Mammary epithelial cell (primary cell): ENCODE measurements at regions of chr6 and their contacts with region 1.

Region 1: GRCh38 chr6:104201557-104201956 is 658.2 kb downstream of the HACE1 start:
- DNase-seq: no peak
- H3K4me3 ChIP-seq: no peak overlapping the region
- H3K27ac ChIP-seq: no peak overlapping the region
- H3K4me1 ChIP-seq: no peaks in the 10 kb centered on the region
- H3K27me3 ChIP-seq: no peaks in the 10 kb centered on the region
- CTCF ChIP-seq: no peak

Region 2: DNA sequence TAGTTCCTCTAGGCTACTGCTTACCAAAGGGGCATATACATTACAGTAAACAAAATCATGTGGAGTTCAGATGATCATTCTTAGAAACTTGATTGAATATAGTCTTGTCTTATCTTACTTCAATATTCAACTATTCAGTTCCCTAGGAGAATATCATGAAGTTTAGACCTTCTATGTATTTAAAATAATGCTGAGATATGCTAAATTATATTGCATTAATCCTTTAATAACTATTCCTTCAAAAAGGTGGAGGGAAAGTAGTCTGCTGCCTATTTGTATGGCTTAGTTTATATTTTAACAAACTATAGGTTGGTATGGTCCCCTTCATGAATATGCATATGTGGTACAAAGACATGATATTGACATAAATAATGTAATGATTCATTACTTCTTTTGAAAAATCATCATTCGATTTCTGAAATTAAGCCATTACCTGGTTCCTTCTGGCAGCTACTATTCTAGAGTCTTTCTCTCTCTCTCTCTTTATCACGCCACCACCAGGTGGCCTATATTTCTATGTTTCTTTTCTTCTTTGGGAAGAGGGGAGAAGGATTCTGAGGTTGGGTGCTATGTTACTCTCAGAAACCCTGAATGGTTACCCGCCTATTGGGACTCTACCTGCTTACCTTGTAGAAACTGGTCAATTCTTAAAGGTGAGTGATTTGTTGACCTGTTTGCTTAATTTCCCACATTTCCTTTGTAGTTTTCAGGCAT is 197.6 kb before region 1 on chr6:
- CTCF ChIA-PET with region 1: no interaction called
- dilution Hi-C with region 1: no loop called
- in situ Hi-C with region 1: no loop called
- intact Hi-C with region 1: loop called (anchors 10 kb)
- DNase-seq: no peak
- H3K4me3 ChIP-seq: no peak overlapping the region
- H3K27ac ChIP-seq: no peak overlapping the region
- H3K4me1 ChIP-seq: no peaks in the 10 kb centered on the region
- H3K27me3 ChIP-seq: no peaks in the 10 kb centered on the region
- CTCF ChIP-seq: peak in 1 of 2 donors; percentile 36